ENCODE measurements at regions of chr10 and their contacts with region 1.

Region 1: GRCh38 chr10:119165171-119166110 is at the start of gene SFXN4:
- DNase-seq: peak; percentile 87 to 91 (median 88)
- ATAC-seq: peak; percentile 83 to 97 (median 94)
- H3K4me3 ChIP-seq: peak within 1 kb of the TSS; percentile 61 to 92 (median 77)
- H3K27ac ChIP-seq: peak within 1 kb of the TSS; percentile 78 to 98 (median 94)
- H3K4me1 ChIP-seq: peaks cover 0 to 28% (median 15%) of the 10 kb centered on the region in 12 donors
- H3K27me3 ChIP-seq: no peaks in the 10 kb centered on the region
- CTCF ChIP-seq: peak in 5 of 12 donors; percentile 11 to 37 (median 17)
- POLR2A ChIP-seq: peak in 1 of 2 donors; percentile 67
- total RNA-seq, gene SFXN4: 33.2 to 48.9 (median 39.6) TPM

Region 2: DNA sequence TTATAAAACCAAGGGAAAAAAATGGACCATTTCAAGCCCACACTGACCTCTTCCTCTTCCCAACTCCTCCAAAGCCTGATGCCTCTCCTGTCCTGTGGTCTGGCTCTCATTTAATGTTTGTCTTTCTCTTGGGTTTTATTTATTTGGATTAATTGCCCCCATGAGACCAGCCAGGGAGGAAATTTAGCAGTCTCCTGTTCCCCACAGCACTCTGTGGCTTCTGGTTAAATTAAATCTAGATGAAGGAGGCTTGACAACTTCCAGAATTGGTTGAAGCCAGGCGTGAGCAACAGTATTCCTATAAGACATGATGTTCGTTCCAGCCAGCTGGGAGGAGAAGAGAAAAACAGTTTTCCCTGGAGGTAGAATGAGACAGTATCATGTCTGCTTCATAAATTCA is 554.9 kb before region 1 on chr10:
- intact Hi-C with region 1: no loop called
- DNase-seq: no peak
- ATAC-seq: no peak
- H3K4me3 ChIP-seq: no peak overlapping the region
- H3K27ac ChIP-seq: peak overlapping the region in 1 of 12 donors; percentile 49
- H3K4me1 ChIP-seq: no peaks in the 10 kb centered on the region
- H3K27me3 ChIP-seq: peaks cover 0 to 8% (median 0%) of the 10 kb centered on the region in 9 donors
- CTCF ChIP-seq: no peak
- POLR2A ChIP-seq: no peak

Region 3: DNA sequence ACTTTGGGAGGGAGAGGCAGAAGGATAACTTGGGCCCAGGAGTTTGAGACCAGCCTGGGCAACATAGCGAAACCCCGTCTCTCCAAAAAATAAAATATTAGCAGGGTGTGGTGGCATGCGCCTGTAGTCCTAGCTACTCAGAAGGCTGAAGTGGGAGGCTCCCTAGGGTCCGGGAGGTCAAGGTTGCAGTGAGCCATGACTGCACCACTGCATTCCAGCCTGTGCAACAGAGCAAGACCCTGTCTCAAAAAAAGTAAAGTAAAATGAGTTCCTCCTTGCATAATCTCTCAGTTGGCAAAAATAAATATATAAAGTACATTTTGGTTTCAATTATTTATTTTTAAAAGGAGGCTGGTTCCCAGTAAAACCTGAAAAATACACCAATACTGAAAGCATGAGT is 124.1 kb before region 1 on chr10:
- intact Hi-C with region 1: no loop called
- DNase-seq: no peak
- ATAC-seq: no peak
- H3K4me3 ChIP-seq: no peak overlapping the region
- H3K27ac ChIP-seq: no peak overlapping the region
- H3K4me1 ChIP-seq: no peaks in the 10 kb centered on the region
- H3K27me3 ChIP-seq: no peaks in the 10 kb centered on the region
- CTCF ChIP-seq: no peak
- POLR2A ChIP-seq: no peak

Region 4: GRCh38 chr10:119080521-119081260 is 84.8 kb before region 1 on chr10 and contains the start of gene EIF3A:
- intact Hi-C with region 1: loop called in 1 of 10 experiments (anchors 1 kb)
- DNase-seq: peak; percentile 93 to 97 (median 94)
- ATAC-seq: peak; percentile 92 to 97 (median 97)
- H3K4me3 ChIP-seq: peak within 1 kb of the TSS; percentile 76 to 100 (median 88)
- H3K27ac ChIP-seq: peak within 1 kb of the TSS; percentile 95 to 100 (median 98)
- H3K4me1 ChIP-seq: peaks cover 0 to 43% (median 32%) of the 10 kb centered on the region in 12 donors
- H3K27me3 ChIP-seq: no peaks in the 10 kb centered on the region
- CTCF ChIP-seq: no peak
- POLR2A ChIP-seq: peak; percentile 50 to 91
- total RNA-seq, gene EIF3A: 80.3 to 143 (median 110) TPM

Region 5: GRCh38 chr10:119120413-119120867 is 45.0 kb before region 1 on chr10:
- intact Hi-C with region 1: no loop called
- DNase-seq: no peak
- ATAC-seq: peak; percentile 71 to 88 (median 82)
- H3K4me3 ChIP-seq: no peak overlapping the region
- H3K27ac ChIP-seq: peak overlapping the region; percentile 0 to 78 (median 63)
- H3K4me1 ChIP-seq: peaks cover 0 to 15% (median 2%) of the 10 kb centered on the region in 12 donors
- H3K27me3 ChIP-seq: no peaks in the 10 kb centered on the region
- CTCF ChIP-seq: no peak
- POLR2A ChIP-seq: no peak

Region 6: GRCh38 chr10:119892188-119893065 is 727.0 kb after region 1 on chr10 and contains the start of gene SEC23IP:
- intact Hi-C with region 1: loop called in 1 of 10 experiments (anchors 10 kb)
- DNase-seq: peak; percentile 97 to 98 (median 98)
- ATAC-seq: peak; percentile 99 to 100 (median 99)
- H3K4me3 ChIP-seq: peak within 1 kb of the TSS; percentile 74 to 97 (median 89)
- H3K27ac ChIP-seq: peak within 1 kb of the TSS; percentile 65 to 95 (median 86)
- H3K4me1 ChIP-seq: peaks cover 3 to 64% (median 37%) of the 10 kb centered on the region in 12 donors
- H3K27me3 ChIP-seq: no peaks in the 10 kb centered on the region
- CTCF ChIP-seq: no peak
- POLR2A ChIP-seq: peak in 1 of 2 donors; percentile 75
- total RNA-seq, gene SEC23IP: 10.9 to 42.0 (median 28.0) TPM

Measured in heart left ventricle (tissue), 16 donors.